Activated CD4-positive, alpha-beta memory T cell treated with anti-CD3 and anti-CD28 coated beads for 36 hours (primary cell): ENCODE measurements at regions of chr2 and their contacts with region 1.

Region 1: GRCh38 chr2:96336104-96336775 is 674 bp downstream of the NCAPH start:
- DNase-seq: no peak
- H3K4me3 Mint-ChIP-seq: peak overlapping the region; percentile 94
- H3K27ac Mint-ChIP-seq: peak overlapping the region; percentile 84
- H3K4me1 Mint-ChIP-seq: peaks cover 51% of the 10 kb centered on the region
- H3K27me3 Mint-ChIP-seq: no peaks in the 10 kb centered on the region

Region 2: DNA sequence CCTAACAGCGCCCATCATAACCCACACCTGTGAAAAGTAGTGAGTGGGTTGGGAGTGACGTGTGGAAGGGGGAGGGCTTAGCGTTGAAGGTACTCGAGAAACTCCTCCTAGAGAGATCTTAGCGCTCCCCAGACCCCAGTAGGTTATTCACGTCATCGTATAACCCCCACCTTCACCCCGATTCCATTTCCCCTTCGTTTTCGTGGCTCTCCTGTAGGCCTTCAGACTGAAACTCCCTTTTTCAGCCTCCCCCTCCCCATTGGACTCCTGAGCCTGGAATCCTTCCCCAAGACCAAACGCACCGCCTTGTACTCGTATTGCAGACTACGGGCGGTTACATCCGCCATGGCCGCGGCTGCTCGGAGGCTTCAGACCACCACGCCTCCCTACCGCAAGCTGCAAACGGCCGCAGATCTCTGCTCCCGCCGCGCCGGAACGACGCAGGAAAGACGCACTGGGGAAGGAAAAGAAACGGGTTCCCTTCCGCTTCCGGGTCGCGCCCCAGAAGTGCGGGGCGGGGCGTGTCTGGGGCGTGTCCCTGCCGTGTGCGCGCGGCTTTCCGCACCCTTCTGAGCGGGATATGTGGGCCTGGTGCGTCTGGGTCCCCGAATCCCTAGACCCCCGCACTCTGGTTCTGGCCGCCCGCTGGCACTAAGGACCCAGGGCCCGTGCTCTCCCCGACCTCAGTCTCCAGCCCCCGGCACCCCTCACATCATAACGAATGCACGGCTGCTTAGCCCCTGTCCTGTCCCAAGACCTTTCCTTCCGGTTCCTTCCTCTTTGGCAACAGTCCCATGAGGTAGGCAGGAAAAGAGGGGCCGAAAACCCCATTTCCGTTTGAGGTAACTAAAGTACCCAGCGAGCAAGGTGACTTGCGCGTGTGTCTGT is 30.9 kb before region 1 on chr2 and contains the start of gene SNRNP200:
- CTCF ChIA-PET with region 1: interaction called, 3 read pairs
- POLR2A ChIA-PET with region 1: interaction called, 9 read pairs
- intact Hi-C with region 1: loop called (anchors 2 kb)
- DNase-seq: peak; percentile 94
- H3K4me3 Mint-ChIP-seq: peak within 1 kb of the TSS; percentile 99
- H3K27ac Mint-ChIP-seq: peak within 1 kb of the TSS; percentile 97
- H3K4me1 Mint-ChIP-seq: peaks cover 47% of the 10 kb centered on the region
- H3K27me3 Mint-ChIP-seq: no peaks in the 10 kb centered on the region
- total RNA-seq, gene SNRNP200: 165 to 175 TPM

Region 3: GRCh38 chr2:96625571-96626552 is 289.6 kb after region 1 on chr2:
- CTCF ChIA-PET with region 1: no interaction called
- POLR2A ChIA-PET with region 1: no interaction called
- intact Hi-C with region 1: no loop called
- DNase-seq: no peak
- H3K4me3 Mint-ChIP-seq: no peak overlapping the region
- H3K27ac Mint-ChIP-seq: no peak overlapping the region
- H3K4me1 Mint-ChIP-seq: peaks cover 13% of the 10 kb centered on the region
- H3K27me3 Mint-ChIP-seq: no peaks in the 10 kb centered on the region